GM12878 (cell line): ENCODE measurements at regions of chr1 and their contacts with region 1.

Region 1: GRCh38 chr1:234978397-234979295 is 150.0 kb downstream of the TOMM20 start:
- DNase-seq: peak; percentile 94
- ATAC-seq: peak; percentile 66
- H3K4me3 ChIP-seq: peak overlapping the region; percentile 29
- H3K27ac ChIP-seq: peak overlapping the region; percentile 98
- H3K4me1 ChIP-seq: peaks cover 76% of the 10 kb centered on the region
- H3K27me3 ChIP-seq: no peaks in the 10 kb centered on the region
- CTCF ChIP-seq: peak in 2 of 3 experiments; percentile 13 to 16; a peak in 2 of 6 replicates
- EP300 ChIP-seq: peak; percentile 96 to 99
- POLR2A ChIP-seq: 0 out of 2 replicates have a peak, but pooled peaks have one; percentile 56
- RAD21 ChIP-seq: peak; percentile 44

Region 2: GRCh38 chr1:234515821-234516241 is 462.8 kb before region 1 on chr1:
- CTCF ChIA-PET with region 1: no interaction called
- POLR2A ChIA-PET with region 1: interaction called, 10 read pairs
- RAD21 ChIA-PET with region 1: no interaction called
- SMC1A ChIA-PET with region 1: no interaction called
- in situ Hi-C with region 1: no loop called
- intact Hi-C with region 1: no loop called
- DNase-seq: no peak
- ATAC-seq: no peak
- H3K4me3 ChIP-seq: no peak overlapping the region
- H3K27ac ChIP-seq: no peak overlapping the region
- H3K4me1 ChIP-seq: peaks cover 5% of the 10 kb centered on the region; the same call in 1 of the 2 replicates
- H3K27me3 ChIP-seq: no peaks in the 10 kb centered on the region
- CTCF ChIP-seq: no peak
- EP300 ChIP-seq: no peak
- POLR2A ChIP-seq: no peak
- RAD21 ChIP-seq: no peak

Region 3: GRCh38 chr1:234722904-234723720 is 255.5 kb before region 1 on chr1:
- CTCF ChIA-PET with region 1: interaction called, 3 read pairs
- POLR2A ChIA-PET with region 1: interaction called, 4 read pairs
- RAD21 ChIA-PET with region 1: interaction called, 11 read pairs
- SMC1A ChIA-PET with region 1: interaction called, 7 read pairs
- in situ Hi-C with region 1: no loop called
- intact Hi-C with region 1: loop called (anchors 2 kb)
- DNase-seq: no peak
- ATAC-seq: no peak
- H3K4me3 ChIP-seq: no peak overlapping the region
- H3K27ac ChIP-seq: peak overlapping the region; percentile 94
- H3K4me1 ChIP-seq: peaks cover 49% of the 10 kb centered on the region
- H3K27me3 ChIP-seq: no peaks in the 10 kb centered on the region
- CTCF ChIP-seq: no peak
- EP300 ChIP-seq: no peak
- POLR2A ChIP-seq: no peak
- RAD21 ChIP-seq: no peak

Region 4: DNA sequence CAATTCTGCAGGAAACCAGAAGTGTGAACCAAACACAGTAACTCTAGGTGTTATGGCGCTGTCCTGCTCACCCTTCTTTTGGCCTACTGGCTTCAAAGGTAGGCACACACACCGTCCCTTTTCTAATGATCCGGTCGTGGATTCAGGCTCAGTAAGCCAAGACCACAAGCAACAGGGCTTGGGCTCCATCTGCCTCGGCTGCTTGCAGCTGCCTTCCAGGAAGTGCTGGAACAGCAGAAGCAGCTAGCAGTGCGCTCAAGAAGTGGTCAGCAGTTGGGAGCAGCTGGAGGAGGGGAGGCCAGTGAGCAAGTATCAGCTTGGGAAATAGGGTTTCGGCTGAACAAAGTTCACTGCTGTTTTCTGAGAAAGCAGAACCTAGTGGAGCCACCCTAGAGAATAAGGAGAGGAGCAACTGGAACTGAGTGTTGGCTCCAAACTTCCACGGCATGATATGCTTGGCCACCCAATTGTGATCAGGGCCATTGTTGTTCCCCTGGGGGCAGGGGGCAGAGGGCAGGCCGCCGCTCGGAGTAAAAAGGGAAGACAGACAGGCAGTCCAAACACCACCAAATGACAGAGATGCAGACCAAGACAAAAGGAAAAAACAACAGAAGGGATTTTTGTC is 23.4 kb before region 1 on chr1:
- CTCF ChIA-PET with region 1: interaction called, 10 read pairs
- POLR2A ChIA-PET with region 1: interaction called, 6 read pairs
- RAD21 ChIA-PET with region 1: interaction called, 258 read pairs
- SMC1A ChIA-PET with region 1: interaction called, 80 read pairs
- in situ Hi-C with region 1: no loop called
- intact Hi-C with region 1: loop called (anchors 2 kb)
- DNase-seq: no peak
- ATAC-seq: peak; percentile 63
- H3K4me3 ChIP-seq: no peak overlapping the region; the same call in 1 of the 2 replicates
- H3K27ac ChIP-seq: peak overlapping the region; percentile 93
- H3K4me1 ChIP-seq: peaks cover 48% of the 10 kb centered on the region
- H3K27me3 ChIP-seq: no peaks in the 10 kb centered on the region
- CTCF ChIP-seq: no peak
- EP300 ChIP-seq: peak in 1 of 2 experiments; percentile 33; a peak in 1 of 4 replicates
- POLR2A ChIP-seq: 0 out of 2 replicates have a peak, but pooled peaks have one; percentile 43
- RAD21 ChIP-seq: no peak

Region 5: DNA sequence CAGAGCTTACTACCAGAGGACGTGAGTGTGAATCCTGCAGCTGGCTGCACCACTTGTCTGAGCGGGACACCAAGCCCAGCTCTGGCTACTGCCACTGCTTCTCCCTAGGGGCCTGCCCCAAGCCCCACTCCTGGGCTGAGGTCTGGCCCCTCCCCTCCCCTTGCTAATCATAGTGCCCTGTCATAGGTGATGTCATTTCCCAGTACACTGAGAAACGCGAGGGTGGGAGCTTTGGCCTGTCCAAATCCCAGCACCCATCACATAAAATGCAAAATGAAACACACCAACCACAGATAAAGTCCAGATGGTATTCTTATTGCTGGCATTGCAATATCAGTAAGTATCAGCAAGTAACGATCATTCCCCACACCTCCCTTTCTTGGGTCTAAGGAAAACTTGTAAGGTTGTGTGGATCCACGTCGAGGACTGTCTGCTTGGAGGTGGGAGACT is 72.3 kb after region 1 on chr1:
- CTCF ChIA-PET with region 1: interaction called, 4 read pairs
- POLR2A ChIA-PET with region 1: interaction called, 3 read pairs
- RAD21 ChIA-PET with region 1: interaction called, 5 read pairs
- SMC1A ChIA-PET with region 1: interaction called, 6 read pairs
- in situ Hi-C with region 1: no loop called
- intact Hi-C with region 1: loop called (anchors 2 kb)
- DNase-seq: no peak
- ATAC-seq: peak; percentile 78
- H3K4me3 ChIP-seq: no peak overlapping the region
- H3K27ac ChIP-seq: no peak overlapping the region
- H3K4me1 ChIP-seq: peaks cover 49% of the 10 kb centered on the region
- H3K27me3 ChIP-seq: no peaks in the 10 kb centered on the region
- CTCF ChIP-seq: no peak
- EP300 ChIP-seq: no peak
- POLR2A ChIP-seq: no peak
- RAD21 ChIP-seq: no peak

Region 6: DNA sequence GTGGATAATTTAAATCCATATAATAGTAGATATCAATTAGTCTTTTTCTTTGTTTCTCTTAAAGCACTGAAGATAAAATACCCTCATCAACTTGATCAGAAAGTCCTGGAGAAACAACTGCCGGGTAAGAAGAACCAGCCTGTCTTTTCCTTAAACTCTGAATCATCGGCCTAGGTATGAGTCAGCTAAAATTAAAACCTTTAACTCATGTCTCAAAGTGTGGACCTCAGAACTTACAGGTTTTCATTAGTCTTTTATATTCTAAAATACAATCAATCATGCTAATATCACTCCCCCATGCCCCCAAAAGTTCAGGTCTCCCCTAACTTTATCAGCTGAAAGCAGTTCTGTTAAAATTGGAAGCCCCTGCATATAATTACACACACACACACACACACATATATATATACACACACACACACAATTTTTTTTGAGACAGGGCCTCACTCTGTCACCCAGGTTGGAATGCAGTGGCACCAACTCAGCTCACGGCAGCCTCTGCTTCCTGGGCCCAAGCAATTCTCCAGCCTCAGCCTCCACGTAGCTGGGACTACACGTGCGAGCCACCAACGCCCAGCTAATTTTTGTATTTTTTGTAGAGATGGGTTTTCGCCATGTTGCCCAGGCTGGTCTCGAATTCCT is 464.3 kb after region 1 on chr1:
- CTCF ChIA-PET with region 1: no interaction called
- POLR2A ChIA-PET with region 1: no interaction called
- RAD21 ChIA-PET with region 1: no interaction called
- SMC1A ChIA-PET with region 1: no interaction called
- in situ Hi-C with region 1: no loop called
- intact Hi-C with region 1: no loop called
- DNase-seq: no peak
- ATAC-seq: no peak
- H3K4me3 ChIP-seq: no peak overlapping the region
- H3K27ac ChIP-seq: no peak overlapping the region
- H3K4me1 ChIP-seq: no peaks in the 10 kb centered on the region
- H3K27me3 ChIP-seq: no peaks in the 10 kb centered on the region
- CTCF ChIP-seq: no peak
- EP300 ChIP-seq: no peak
- POLR2A ChIP-seq: no peak
- RAD21 ChIP-seq: no peak